ENCODE measurements at regions of chr3 and their contacts with region 1.

Region 1: DNA sequence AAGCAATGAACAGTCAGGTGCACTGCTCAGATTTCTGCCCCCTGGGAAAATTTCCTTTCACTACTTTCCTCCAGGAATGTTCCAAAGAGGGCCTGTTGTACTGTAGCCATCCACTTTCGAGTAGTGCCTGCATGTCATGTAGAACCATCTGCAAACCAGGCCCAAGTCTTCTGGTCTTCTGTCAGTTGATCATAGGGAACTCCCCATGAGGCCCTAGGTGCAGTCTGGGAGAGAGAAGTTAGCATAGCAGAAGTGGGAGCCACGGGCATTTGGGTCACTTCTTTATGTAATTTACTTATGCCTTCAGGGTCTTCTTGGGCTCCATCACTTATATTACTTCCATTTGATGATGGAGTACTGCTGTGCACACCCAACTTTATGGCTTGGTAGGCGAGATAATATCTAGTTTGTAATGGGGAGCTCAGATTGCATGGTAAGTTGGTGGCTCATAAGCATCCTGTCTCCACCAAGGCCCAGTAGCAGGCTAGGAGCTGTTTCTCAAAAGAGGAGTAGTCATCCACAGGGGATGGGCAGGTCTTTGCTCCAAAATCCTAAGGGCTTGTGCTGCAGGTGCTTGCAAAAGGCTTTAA is 151.4 kb downstream of the NFKBIZ start:
- DNase-seq: no peak
- H3K4me3 ChIP-seq: no peak overlapping the region
- H3K27ac ChIP-seq: no peak overlapping the region
- H3K4me1 ChIP-seq: no peaks in the 10 kb centered on the region
- H3K27me3 ChIP-seq: no peaks in the 10 kb centered on the region
- CTCF ChIP-seq: no peak
- POLR2A ChIP-seq: no peak

Region 2: DNA sequence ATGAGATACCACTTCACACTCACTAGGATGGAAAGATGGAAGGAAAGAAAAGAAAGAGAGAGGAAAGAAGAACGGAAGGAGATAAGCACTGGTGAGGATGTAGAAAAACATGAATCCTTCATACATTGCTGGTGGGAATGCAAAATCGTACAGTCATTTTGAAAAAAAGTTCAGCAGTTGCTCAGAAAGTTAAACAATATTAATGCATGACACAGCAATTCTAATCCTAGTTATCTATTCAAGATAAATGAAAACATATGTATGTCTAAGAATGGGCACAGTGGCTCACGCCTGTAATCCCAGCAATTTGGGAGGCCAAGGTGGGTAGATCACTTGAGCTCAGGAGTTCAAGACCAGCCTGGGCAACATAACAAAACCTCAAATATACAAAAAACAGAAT is 546.8 kb before region 1 on chr3:
- CTCF ChIA-PET with region 1: no interaction called
- POLR2A ChIA-PET with region 1: no interaction called
- dilution Hi-C with region 1: no loop called
- intact Hi-C with region 1: no loop called
- DNase-seq: no peak
- H3K4me3 ChIP-seq: no peak overlapping the region
- H3K27ac ChIP-seq: no peak overlapping the region
- H3K4me1 ChIP-seq: no peaks in the 10 kb centered on the region
- H3K27me3 ChIP-seq: no peaks in the 10 kb centered on the region
- CTCF ChIP-seq: no peak
- POLR2A ChIP-seq: no peak

Region 3: GRCh38 chr3:101602731-101603130 is 398.0 kb before region 1 on chr3:
- CTCF ChIA-PET with region 1: no interaction called
- POLR2A ChIA-PET with region 1: no interaction called
- dilution Hi-C with region 1: no loop called
- intact Hi-C with region 1: no loop called
- DNase-seq: no peak
- H3K4me3 ChIP-seq: no peak overlapping the region
- H3K27ac ChIP-seq: no peak overlapping the region
- H3K4me1 ChIP-seq: no peaks in the 10 kb centered on the region
- H3K27me3 ChIP-seq: no peaks in the 10 kb centered on the region
- CTCF ChIP-seq: no peak
- POLR2A ChIP-seq: no peak

Region 4: DNA sequence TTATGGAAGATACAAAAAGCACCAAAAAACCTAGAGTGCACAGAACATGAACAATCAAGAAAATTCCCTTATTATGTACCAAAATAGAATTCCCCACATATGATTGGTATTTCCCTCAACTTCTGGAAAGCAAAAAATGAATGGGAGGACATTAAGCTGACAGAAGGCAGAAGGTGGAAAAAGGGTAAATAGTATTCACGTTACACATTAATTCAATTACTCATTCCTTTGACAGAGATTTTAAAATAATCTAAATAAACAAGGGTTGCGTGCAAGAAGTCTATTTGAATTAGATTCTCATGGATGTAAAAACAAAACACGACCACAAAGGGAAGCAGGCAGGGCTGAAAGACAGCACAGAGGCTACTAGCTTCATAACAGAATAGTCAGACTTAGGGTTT is 173.6 kb after region 1 on chr3:
- CTCF ChIA-PET with region 1: no interaction called
- POLR2A ChIA-PET with region 1: no interaction called
- dilution Hi-C with region 1: no loop called
- intact Hi-C with region 1: loop called (anchors 5 kb)
- DNase-seq: peak; percentile 87
- H3K4me3 ChIP-seq: no peak overlapping the region
- H3K27ac ChIP-seq: peak overlapping the region; percentile 91
- H3K4me1 ChIP-seq: peaks cover 56% of the 10 kb centered on the region
- H3K27me3 ChIP-seq: no peaks in the 10 kb centered on the region
- CTCF ChIP-seq: no peak
- POLR2A ChIP-seq: no peak

Measured in endothelial cell of umbilical vein (primary cell).